Activated CD8-positive, alpha-beta T cell treated with anti-CD3 and anti-CD28 coated beads for 36 hours (primary cell): ENCODE measurements at regions of chr5 and their contacts with region 1.

Region 1: GRCh38 chr5:157130925-157131324 is 11.7 kb downstream of the MED7 start:
- DNase-seq: no peak
- ATAC-seq: no peak
- H3K4me3 Mint-ChIP-seq: no peak overlapping the region
- H3K27ac Mint-ChIP-seq: no peak overlapping the region
- H3K4me1 Mint-ChIP-seq: peaks cover 31% of the 10 kb centered on the region
- H3K27me3 Mint-ChIP-seq: no peaks in the 10 kb centered on the region
- CTCF ChIP-seq: no peak

Region 2: DNA sequence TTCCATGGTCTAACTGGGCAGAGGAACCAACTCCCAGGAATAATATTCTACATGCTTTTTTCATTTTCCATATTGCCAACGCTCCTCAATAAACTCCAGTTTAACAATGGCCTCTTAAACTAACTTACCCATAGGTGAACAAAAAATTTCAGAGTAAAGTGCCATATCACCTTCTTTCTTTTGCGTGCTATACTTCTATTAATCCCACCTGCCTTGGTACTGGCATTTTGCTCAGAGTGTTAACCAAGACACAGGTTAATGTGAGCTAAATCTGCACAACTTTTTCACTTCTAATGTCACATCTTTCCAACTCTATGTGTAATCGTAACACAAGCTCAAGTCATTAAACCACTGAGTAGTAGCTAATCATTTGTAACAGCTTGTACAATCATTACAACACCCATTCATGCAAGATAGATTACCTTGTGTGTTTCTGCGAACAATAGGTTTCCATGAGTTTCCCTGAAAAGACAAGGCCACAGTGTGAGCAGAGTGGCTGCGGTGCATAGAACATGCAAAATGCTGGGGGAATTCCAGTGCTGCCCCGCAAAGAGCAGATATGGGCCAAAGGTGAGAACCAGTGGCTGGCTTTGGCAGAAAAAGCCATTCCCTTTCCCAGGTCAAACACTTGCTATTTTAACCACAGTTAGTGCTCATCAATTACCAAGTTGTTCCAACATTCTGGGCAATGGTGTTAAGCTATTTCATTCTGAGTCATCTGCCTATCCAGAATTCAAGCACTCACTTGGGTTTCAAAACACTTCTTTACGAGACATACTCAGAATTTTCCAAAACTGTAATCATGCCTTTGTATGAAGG is 210.7 kb before region 1 on chr5:
- CTCF ChIA-PET with region 1: interaction called, 6 read pairs
- POLR2A ChIA-PET with region 1: interaction called, 4 read pairs
- intact Hi-C with region 1: loop called (anchors 5 kb)
- DNase-seq: peak; percentile 90
- ATAC-seq: peak; percentile 77
- H3K4me3 Mint-ChIP-seq: peak overlapping the region; percentile 63
- H3K27ac Mint-ChIP-seq: peak overlapping the region; percentile 88
- H3K4me1 Mint-ChIP-seq: peaks cover 58% of the 10 kb centered on the region
- H3K27me3 Mint-ChIP-seq: no peaks in the 10 kb centered on the region
- CTCF ChIP-seq: no peak

Region 3: GRCh38 chr5:156942064-156942463 is 188.9 kb before region 1 on chr5:
- CTCF ChIA-PET with region 1: interaction called, 12 read pairs
- POLR2A ChIA-PET with region 1: no interaction called
- intact Hi-C with region 1: no loop called
- DNase-seq: no peak
- ATAC-seq: peak; percentile 89
- H3K4me3 Mint-ChIP-seq: no peak overlapping the region
- H3K27ac Mint-ChIP-seq: peak overlapping the region; percentile 76
- H3K4me1 Mint-ChIP-seq: peaks cover 28% of the 10 kb centered on the region
- H3K27me3 Mint-ChIP-seq: no peaks in the 10 kb centered on the region
- CTCF ChIP-seq: no peak

Region 4: GRCh38 chr5:157072508-157072907 is 58.4 kb before region 1 on chr5:
- CTCF ChIA-PET with region 1: no interaction called
- POLR2A ChIA-PET with region 1: no interaction called
- intact Hi-C with region 1: loop called (anchors 2 kb)
- DNase-seq: peak; percentile 67
- ATAC-seq: peak; percentile 74
- H3K4me3 Mint-ChIP-seq: no peak overlapping the region
- H3K27ac Mint-ChIP-seq: peak overlapping the region; percentile 12
- H3K4me1 Mint-ChIP-seq: peaks cover 30% of the 10 kb centered on the region
- H3K27me3 Mint-ChIP-seq: no peaks in the 10 kb centered on the region
- CTCF ChIP-seq: no peak

Region 5: DNA sequence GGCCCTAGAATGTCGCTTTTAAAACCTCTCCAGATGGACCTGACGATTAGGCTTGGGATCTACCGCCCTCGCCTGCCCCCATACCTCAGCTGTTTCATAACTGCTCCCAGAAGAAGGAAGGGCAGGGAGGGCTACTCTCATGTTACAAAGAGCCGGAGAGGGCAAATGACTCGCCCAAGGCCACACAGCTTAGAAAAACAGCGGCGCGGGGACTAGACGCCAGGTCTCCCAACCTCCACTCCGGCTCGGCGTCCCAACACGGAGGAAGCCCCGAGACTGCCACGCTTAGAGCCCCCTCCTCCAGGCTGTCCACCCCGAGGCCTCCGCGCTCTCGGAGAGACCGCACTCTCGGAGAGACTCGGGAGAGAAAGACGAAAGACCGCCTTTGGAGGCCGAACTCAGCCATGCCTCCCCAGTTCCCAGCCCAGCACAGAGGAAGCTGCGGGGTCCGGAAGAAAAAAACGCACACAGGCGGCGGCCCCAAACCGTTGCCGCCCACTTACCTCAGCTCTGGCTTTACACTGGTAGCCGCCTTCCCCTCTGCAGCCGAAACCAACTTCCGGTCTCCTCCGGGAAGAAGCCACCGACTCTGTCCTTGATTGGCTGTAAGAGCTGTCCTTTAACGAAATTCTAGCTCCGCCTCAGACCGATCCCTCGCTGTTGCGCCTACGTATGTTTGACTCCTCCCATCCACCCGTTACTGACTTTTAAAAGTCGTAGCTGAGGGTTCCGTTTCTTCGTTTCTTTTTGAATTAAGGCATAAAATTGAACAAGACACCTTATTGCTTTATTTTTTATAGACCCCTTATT is 11.6 kb after region 1 on chr5 and contains the start of gene MED7:
- CTCF ChIA-PET with region 1: interaction called, 25 read pairs
- POLR2A ChIA-PET with region 1: interaction called, 6 read pairs
- intact Hi-C with region 1: no loop called
- DNase-seq: peak; percentile 96
- ATAC-seq: peak; percentile 98
- H3K4me3 Mint-ChIP-seq: peak within 1 kb of the TSS; percentile 86
- H3K27ac Mint-ChIP-seq: peak within 1 kb of the TSS; percentile 98
- H3K4me1 Mint-ChIP-seq: peaks cover 39% of the 10 kb centered on the region
- H3K27me3 Mint-ChIP-seq: no peaks in the 10 kb centered on the region
- CTCF ChIP-seq: no peak
- total RNA-seq, gene MED7: 13.6 to 13.7 TPM

Region 6: GRCh38 chr5:157233515-157233914 is 102.6 kb after region 1 on chr5:
- CTCF ChIA-PET with region 1: no interaction called
- POLR2A ChIA-PET with region 1: no interaction called
- intact Hi-C with region 1: no loop called
- DNase-seq: no peak
- ATAC-seq: peak; percentile 58
- H3K4me3 Mint-ChIP-seq: no peak overlapping the region
- H3K27ac Mint-ChIP-seq: peak overlapping the region; percentile 89
- H3K4me1 Mint-ChIP-seq: peaks cover 75% of the 10 kb centered on the region
- H3K27me3 Mint-ChIP-seq: no peaks in the 10 kb centered on the region
- CTCF ChIP-seq: no peak